Activated naive CD4-positive, alpha-beta T cell treated with anti-CD3 and anti-CD28 coated beads for 36 hours (primary cell): ENCODE measurements at regions of chr7 and their contacts with region 1.

Region 1: GRCh38 chr7:110948280-110948679 is 142.6 kb upstream of the LRRN3 start:
- DNase-seq: no peak
- H3K4me3 Mint-ChIP-seq: no peak overlapping the region
- H3K27ac Mint-ChIP-seq: no peak overlapping the region
- H3K4me1 Mint-ChIP-seq: peaks cover 2% of the 10 kb centered on the region
- H3K27me3 Mint-ChIP-seq: no peaks in the 10 kb centered on the region

Region 2: DNA sequence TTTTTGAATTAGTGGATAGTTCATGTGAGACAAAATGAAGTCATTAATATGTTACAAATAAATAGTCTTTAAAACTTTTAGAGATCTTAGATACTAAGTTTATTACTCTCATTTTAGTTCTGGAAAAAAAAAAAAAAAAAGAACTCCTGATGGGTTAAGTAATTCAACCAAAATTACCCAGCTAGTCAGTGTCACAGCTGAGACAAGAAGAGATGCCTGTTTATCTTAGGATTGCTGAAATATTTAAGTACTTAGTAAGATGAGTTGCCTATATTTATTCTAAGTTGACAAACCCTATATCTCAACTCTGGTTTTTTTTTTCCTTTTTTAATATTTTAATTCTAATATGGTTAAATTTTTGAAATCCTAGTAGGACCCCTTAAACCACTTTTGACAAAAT is 638.3 kb before region 1 on chr7:
- CTCF ChIA-PET with region 1: no interaction called
- intact Hi-C with region 1: no loop called
- DNase-seq: no peak
- H3K4me3 Mint-ChIP-seq: no peak overlapping the region
- H3K27ac Mint-ChIP-seq: no peak overlapping the region
- H3K4me1 Mint-ChIP-seq: no peaks in the 10 kb centered on the region
- H3K27me3 Mint-ChIP-seq: no peaks in the 10 kb centered on the region

Region 3: GRCh38 chr7:110964770-110965169 is 16.5 kb after region 1 on chr7:
- CTCF ChIA-PET with region 1: no interaction called
- intact Hi-C with region 1: loop called (anchors 2 kb)
- DNase-seq: no peak
- H3K4me3 Mint-ChIP-seq: no peak overlapping the region
- H3K27ac Mint-ChIP-seq: no peak overlapping the region
- H3K4me1 Mint-ChIP-seq: peaks cover 8% of the 10 kb centered on the region
- H3K27me3 Mint-ChIP-seq: no peaks in the 10 kb centered on the region

Region 4: GRCh38 chr7:111012799-111013675 is 64.8 kb after region 1 on chr7:
- CTCF ChIA-PET with region 1: no interaction called
- intact Hi-C with region 1: no loop called
- DNase-seq: peak; percentile 67
- H3K4me3 Mint-ChIP-seq: peak overlapping the region; percentile 37
- H3K27ac Mint-ChIP-seq: peak overlapping the region; percentile 86
- H3K4me1 Mint-ChIP-seq: peaks cover 72% of the 10 kb centered on the region
- H3K27me3 Mint-ChIP-seq: no peaks in the 10 kb centered on the region